Naive thymus-derived CD4-positive, alpha-beta T cell (primary cell): ENCODE measurements at regions of chr12 and their contacts with region 1.

Region 1: GRCh38 chr12:43444940-43445564 is 107.0 kb downstream of the ADAMTS20 start:
- DNase-seq: peak in 8 of 9 donors; percentile 8 to 41 (median 28)
- ATAC-seq: no peak
- H3K4me3 ChIP-seq: no peak overlapping the region
- H3K4me3 Mint-ChIP-seq: no peak overlapping the region
- H3K27ac ChIP-seq: no peak overlapping the region
- H3K27ac Mint-ChIP-seq: no peak overlapping the region
- H3K4me1 ChIP-seq: no peaks in the 10 kb centered on the region
- H3K4me1 Mint-ChIP-seq: no peaks in the 10 kb centered on the region
- H3K27me3 ChIP-seq: no peaks in the 10 kb centered on the region
- H3K27me3 Mint-ChIP-seq: peaks cover 0 to 8% (median 6%) of the 10 kb centered on the region in 5 donors

Region 2: GRCh38 chr12:43556057-43556456 is 111.0 kb after region 1 on chr12:
- CTCF ChIA-PET with region 1: no interaction called
- POLR2A ChIA-PET with region 1: no interaction called
- intact Hi-C with region 1: no loop called
- DNase-seq: no peak
- ATAC-seq: no peak
- H3K4me3 ChIP-seq: no peak overlapping the region
- H3K4me3 Mint-ChIP-seq: no peak overlapping the region
- H3K27ac ChIP-seq: no peak overlapping the region
- H3K27ac Mint-ChIP-seq: no peak overlapping the region
- H3K4me1 ChIP-seq: no peaks in the 10 kb centered on the region
- H3K4me1 Mint-ChIP-seq: peaks cover 0 to 3% (median 0%) of the 10 kb centered on the region in 7 donors
- H3K27me3 ChIP-seq: peaks cover 0 to 3% of the 10 kb centered on the region in 2 donors
- H3K27me3 Mint-ChIP-seq: peaks cover 22 to 28% (median 25%) of the 10 kb centered on the region in 5 donors

Region 3: GRCh38 chr12:43728117-43728516 is 283.1 kb after region 1 on chr12:
- CTCF ChIA-PET with region 1: no interaction called
- POLR2A ChIA-PET with region 1: no interaction called
- intact Hi-C with region 1: loop called (anchors 2 to 5 kb)
- DNase-seq: no peak
- ATAC-seq: no peak
- H3K4me3 ChIP-seq: no peak overlapping the region
- H3K4me3 Mint-ChIP-seq: no peak overlapping the region
- H3K27ac ChIP-seq: no peak overlapping the region
- H3K27ac Mint-ChIP-seq: no peak overlapping the region
- H3K4me1 ChIP-seq: no peaks in the 10 kb centered on the region
- H3K4me1 Mint-ChIP-seq: peaks cover 0 to 14% (median 8%) of the 10 kb centered on the region in 7 donors
- H3K27me3 ChIP-seq: no peaks in the 10 kb centered on the region
- H3K27me3 Mint-ChIP-seq: no peaks in the 10 kb centered on the region

Region 4: DNA sequence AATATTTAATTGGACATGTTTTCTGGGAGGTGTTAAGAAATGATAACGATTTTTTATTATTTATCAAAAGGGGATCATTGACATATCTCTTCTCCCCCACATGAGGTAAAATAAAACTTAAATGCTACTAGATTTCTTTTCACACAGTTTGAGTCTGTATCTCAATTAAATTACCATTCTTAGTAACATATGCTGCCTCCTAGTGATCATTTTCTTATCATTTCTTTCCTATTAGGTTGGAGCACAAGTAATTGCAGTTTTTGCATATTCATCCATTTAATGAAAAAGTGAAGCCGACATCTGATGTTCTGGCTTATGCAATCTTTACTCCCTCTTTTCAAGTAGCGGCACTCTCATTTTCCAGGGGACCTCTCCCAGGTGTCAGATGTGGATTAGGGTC is 288.6 kb after region 1 on chr12:
- CTCF ChIA-PET with region 1: no interaction called
- POLR2A ChIA-PET with region 1: no interaction called
- intact Hi-C with region 1: loop called (anchors 2 to 5 kb)
- DNase-seq: no peak
- ATAC-seq: no peak
- H3K4me3 ChIP-seq: no peak overlapping the region
- H3K4me3 Mint-ChIP-seq: no peak overlapping the region
- H3K27ac ChIP-seq: no peak overlapping the region
- H3K27ac Mint-ChIP-seq: no peak overlapping the region
- H3K4me1 ChIP-seq: no peaks in the 10 kb centered on the region
- H3K4me1 Mint-ChIP-seq: peaks cover 0 to 14% (median 8%) of the 10 kb centered on the region in 7 donors
- H3K27me3 ChIP-seq: no peaks in the 10 kb centered on the region
- H3K27me3 Mint-ChIP-seq: no peaks in the 10 kb centered on the region